ENCODE measurements at regions of chr1 and their contacts with region 1.

Region 1: GRCh38 chr1:11842154-11843041 is 5.2 kb downstream of the NPPA start:
- DNase-seq: peak; percentile 62
- CTCF ChIP-seq: no peak

Region 2: DNA sequence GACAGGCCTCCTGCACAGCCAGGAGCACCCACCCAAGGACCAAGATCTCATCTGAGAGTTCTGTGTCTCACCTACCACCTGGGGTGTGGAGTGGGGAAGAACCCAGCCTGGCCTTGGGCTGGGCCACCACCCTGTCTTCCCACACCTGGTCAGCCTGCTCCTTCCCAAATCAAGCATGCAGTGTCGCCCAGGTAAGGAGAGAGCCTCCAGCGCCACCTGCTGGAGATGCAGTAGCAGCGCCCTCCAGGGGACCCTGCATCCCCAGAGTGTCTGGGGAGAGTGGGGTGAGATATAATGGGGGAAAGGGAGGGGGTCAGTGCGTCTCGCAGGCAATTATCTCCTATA is 51.5 kb after region 1 on chr1:
- in situ Hi-C with region 1: loop called (anchors 10 kb)
- DNase-seq: peak; percentile 89
- CTCF ChIP-seq: peak; percentile 97

Region 3: DNA sequence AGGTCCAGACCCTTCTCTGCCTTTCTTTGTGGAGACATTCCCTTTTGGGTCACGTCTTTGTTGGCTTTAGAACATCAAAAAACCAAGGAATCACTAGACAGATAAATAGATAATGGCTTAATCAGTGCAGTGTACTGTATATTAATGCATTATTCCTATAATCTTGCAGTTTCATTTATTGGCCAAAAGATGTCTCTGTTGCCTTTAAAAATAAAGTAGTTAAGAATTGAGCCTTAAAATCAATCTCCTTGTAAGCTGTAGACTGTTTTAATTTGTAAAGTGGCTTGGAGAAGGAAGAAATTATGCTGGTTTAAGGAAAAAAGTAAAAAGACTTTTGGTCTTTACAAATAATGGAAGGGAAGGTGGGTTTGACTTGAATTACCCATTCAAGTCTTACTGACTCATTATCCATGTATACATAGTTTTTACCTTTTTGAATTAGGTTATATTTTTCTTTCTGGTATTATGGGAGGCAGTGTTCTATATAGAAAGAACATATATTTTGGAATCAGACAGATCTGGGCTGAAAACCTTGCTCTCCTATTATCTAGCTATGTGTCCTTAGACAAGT is 472.0 kb after region 1 on chr1:
- in situ Hi-C with region 1: no loop called
- DNase-seq: peak; percentile 32
- CTCF ChIP-seq: peak; percentile 52

Measured in GM13977 (cell line).